ENCODE measurements at regions of chr4 and their contacts with region 1.

Region 1: DNA sequence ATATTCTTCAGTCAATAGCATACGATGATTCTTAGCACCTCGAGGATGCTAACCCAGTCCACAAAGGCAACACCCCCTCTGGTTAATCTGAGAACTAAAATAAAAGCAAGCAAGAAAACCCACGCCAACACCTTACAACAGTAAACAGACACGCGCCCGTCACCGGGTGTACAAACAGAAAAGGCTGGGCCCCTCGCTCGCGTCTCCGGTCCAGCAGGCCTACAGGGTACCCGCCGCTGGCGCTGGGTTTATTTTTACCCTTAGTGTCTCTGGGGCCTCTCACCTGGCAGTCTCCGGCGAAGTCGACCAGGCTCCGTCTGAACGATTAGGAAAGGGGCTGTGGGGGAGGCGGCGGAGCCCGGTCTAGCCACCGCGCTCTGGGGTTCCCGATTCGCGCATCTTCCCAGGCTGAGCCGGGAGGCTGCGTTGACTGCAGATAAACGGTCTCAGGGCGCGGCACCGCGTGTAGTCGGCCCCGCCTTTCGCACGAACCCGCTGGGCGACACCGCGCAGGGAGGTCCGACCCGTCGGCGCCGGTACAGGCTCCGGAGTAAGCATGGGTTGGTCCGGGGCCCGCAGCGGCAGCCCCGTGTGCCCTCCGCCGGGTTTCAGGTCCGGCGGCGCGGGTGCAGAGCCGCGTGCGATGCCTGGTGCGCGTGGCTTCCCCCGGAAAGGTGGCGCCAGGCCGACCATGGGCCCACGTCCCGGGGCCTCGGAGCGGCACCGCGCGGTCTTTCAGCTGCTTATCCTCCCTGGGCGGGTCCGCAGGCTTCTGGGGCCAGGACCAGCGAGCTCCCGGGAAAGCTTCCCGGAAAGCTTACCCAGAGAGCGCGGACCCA is 441 bp downstream of the SLC9B2 start:
- DNase-seq: peak; percentile 72
- H3K4me3 Mint-ChIP-seq: peak overlapping the region; percentile 79
- H3K27ac Mint-ChIP-seq: peak overlapping the region; percentile 99
- H3K4me1 Mint-ChIP-seq: peaks cover 42% of the 10 kb centered on the region
- H3K27me3 Mint-ChIP-seq: no peaks in the 10 kb centered on the region

Region 2: DNA sequence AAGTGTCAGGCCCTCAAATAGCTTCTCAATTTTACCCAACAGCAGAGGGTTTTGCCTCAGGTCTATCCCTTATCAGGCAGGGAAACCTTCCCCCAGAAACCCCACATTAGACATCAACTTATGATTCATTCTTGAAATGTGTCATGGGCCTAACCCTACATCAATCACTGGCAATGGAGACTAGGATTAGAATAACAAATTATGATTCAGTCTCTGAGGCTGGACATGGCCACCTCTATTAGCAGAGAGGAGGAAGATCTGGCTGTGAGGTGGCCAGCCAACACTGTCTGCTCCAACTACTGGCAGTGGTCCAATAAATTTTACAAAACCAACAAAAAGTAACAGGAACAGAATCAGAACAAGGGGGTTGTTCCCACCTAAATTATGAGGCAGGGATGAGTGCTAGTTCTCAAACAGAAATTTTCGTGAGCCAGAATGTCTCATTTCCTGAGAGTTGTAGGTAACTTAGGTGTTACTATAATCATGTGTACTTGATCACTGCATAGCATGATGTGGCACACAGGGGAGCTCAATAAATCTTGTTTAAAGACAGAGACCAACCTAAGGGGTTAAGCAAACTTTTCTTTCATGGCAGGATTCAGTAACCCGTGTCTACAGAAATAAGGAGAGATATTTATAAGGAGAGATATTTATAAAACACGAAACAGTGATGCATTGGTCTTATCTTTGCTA is 448.1 kb before region 1 on chr4:
- CTCF ChIA-PET with region 1: no interaction called
- POLR2A ChIA-PET with region 1: no interaction called
- intact Hi-C with region 1: loop called (anchors 2 kb)
- DNase-seq: peak; percentile 37
- H3K4me3 Mint-ChIP-seq: no peak overlapping the region
- H3K27ac Mint-ChIP-seq: peak overlapping the region; percentile 69
- H3K4me1 Mint-ChIP-seq: peaks cover 67% of the 10 kb centered on the region
- H3K27me3 Mint-ChIP-seq: no peaks in the 10 kb centered on the region

Region 3: GRCh38 chr4:102780476-102781144 is 295.5 kb before region 1 on chr4:
- CTCF ChIA-PET with region 1: no interaction called
- POLR2A ChIA-PET with region 1: no interaction called
- intact Hi-C with region 1: loop called (anchors 10 kb)
- DNase-seq: no peak
- H3K4me3 Mint-ChIP-seq: no peak overlapping the region
- H3K27ac Mint-ChIP-seq: no peak overlapping the region
- H3K4me1 Mint-ChIP-seq: peaks cover 4% of the 10 kb centered on the region
- H3K27me3 Mint-ChIP-seq: no peaks in the 10 kb centered on the region

Region 4: GRCh38 chr4:103019308-103020124 is 56.6 kb before region 1 on chr4 and contains the start of gene SLC9B1:
- CTCF ChIA-PET with region 1: no interaction called
- POLR2A ChIA-PET with region 1: interaction called, 4 read pairs
- intact Hi-C with region 1: loop called (anchors 1 kb)
- DNase-seq: peak; percentile 97
- H3K4me3 Mint-ChIP-seq: peak within 1 kb of the TSS; percentile 84
- H3K27ac Mint-ChIP-seq: peak within 1 kb of the TSS; percentile 92
- H3K4me1 Mint-ChIP-seq: peaks cover 15% of the 10 kb centered on the region
- H3K27me3 Mint-ChIP-seq: no peaks in the 10 kb centered on the region
- total RNA-seq, gene SLC9B1: 1.9 to 2.4 TPM

Region 5: GRCh38 chr4:103046416-103047290 is 29.5 kb before region 1 on chr4:
- CTCF ChIA-PET with region 1: interaction called, 4 read pairs
- POLR2A ChIA-PET with region 1: interaction called, 3 read pairs
- intact Hi-C with region 1: loop called (anchors 2 kb)
- DNase-seq: peak; percentile 40
- H3K4me3 Mint-ChIP-seq: no peak overlapping the region
- H3K27ac Mint-ChIP-seq: no peak overlapping the region
- H3K4me1 Mint-ChIP-seq: peaks cover 10% of the 10 kb centered on the region
- H3K27me3 Mint-ChIP-seq: no peaks in the 10 kb centered on the region

Region 6: GRCh38 chr4:103060453-103061148 is 15.5 kb before region 1 on chr4:
- CTCF ChIA-PET with region 1: no interaction called
- POLR2A ChIA-PET with region 1: no interaction called
- intact Hi-C with region 1: no loop called
- DNase-seq: no peak
- H3K4me3 Mint-ChIP-seq: no peak overlapping the region
- H3K27ac Mint-ChIP-seq: no peak overlapping the region
- H3K4me1 Mint-ChIP-seq: no peaks in the 10 kb centered on the region
- H3K27me3 Mint-ChIP-seq: no peaks in the 10 kb centered on the region

Region 7: DNA sequence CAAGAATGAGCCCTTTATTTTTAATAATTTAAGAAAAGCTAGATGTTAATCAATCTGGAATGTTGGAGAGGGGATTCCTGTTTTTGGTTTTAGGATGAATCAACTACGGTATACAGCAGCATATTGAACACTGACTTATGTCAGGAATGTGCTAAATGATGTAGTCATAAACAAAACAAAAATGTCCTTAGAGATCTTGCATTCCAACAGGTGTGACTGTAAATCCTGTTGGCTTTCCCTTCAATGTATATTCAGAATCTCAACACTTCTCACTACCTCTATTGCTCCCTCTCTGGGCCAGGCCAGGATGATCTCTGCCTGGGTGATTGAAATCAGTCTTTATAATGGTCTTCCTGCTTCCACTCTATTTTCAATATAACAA is 61.3 kb after region 1 on chr4:
- CTCF ChIA-PET with region 1: no interaction called
- POLR2A ChIA-PET with region 1: no interaction called
- intact Hi-C with region 1: no loop called
- DNase-seq: no peak
- H3K4me3 Mint-ChIP-seq: no peak overlapping the region
- H3K27ac Mint-ChIP-seq: no peak overlapping the region
- H3K4me1 Mint-ChIP-seq: peaks cover 11% of the 10 kb centered on the region
- H3K27me3 Mint-ChIP-seq: no peaks in the 10 kb centered on the region

Measured in activated CD4-positive, alpha-beta memory T cell treated with anti-CD3 and anti-CD28 coated beads for 36 hours (primary cell).